CD14-positive monocyte (primary cell): ENCODE measurements at regions of chr6 and their contacts with region 1.

Region 1: DNA sequence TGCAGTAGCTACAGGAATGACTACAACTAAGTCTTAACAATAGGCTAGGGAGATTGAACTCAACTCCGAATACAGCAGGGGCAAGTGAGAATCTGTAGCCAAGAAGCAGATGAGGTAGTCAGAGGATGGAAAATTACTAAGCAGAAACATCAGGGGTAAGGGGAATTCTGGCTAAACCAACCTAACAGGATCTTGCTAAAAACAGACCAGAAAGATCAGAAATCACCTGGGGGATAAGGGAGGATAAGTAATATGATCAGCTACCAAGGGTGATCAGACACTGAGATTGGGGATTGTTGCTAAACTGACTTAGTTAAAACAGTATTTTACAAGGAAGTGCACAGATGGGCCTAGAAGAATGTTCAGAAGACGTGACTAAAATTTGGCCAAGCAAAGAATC is 217.5 kb downstream of the TENT5A start:
- DNase-seq: no peak
- H3K4me3 ChIP-seq: no peak overlapping the region
- H3K4me3 Mint-ChIP-seq: no peak overlapping the region
- H3K27ac ChIP-seq: no peak overlapping the region
- H3K27ac Mint-ChIP-seq: no peak overlapping the region
- H3K4me1 ChIP-seq: no peaks in the 10 kb centered on the region
- H3K4me1 Mint-ChIP-seq: no peaks in the 10 kb centered on the region
- H3K27me3 ChIP-seq: no peaks in the 10 kb centered on the region
- H3K27me3 Mint-ChIP-seq: peaks cover 0 to 2% (median 0%) of the 10 kb centered on the region in 3 donors
- CTCF ChIP-seq: no peak

Region 2: GRCh38 chr6:81487489-81487888 is 47.5 kb before region 1 on chr6:
- intact Hi-C with region 1: no loop called
- DNase-seq: no peak
- H3K4me3 ChIP-seq: no peak overlapping the region
- H3K4me3 Mint-ChIP-seq: no peak overlapping the region
- H3K27ac ChIP-seq: no peak overlapping the region
- H3K27ac Mint-ChIP-seq: no peak overlapping the region
- H3K4me1 ChIP-seq: no peaks in the 10 kb centered on the region
- H3K4me1 Mint-ChIP-seq: no peaks in the 10 kb centered on the region
- H3K27me3 ChIP-seq: no peaks in the 10 kb centered on the region
- H3K27me3 Mint-ChIP-seq: peaks cover 0 to 3% (median 2%) of the 10 kb centered on the region in 3 donors
- CTCF ChIP-seq: no peak

Region 3: DNA sequence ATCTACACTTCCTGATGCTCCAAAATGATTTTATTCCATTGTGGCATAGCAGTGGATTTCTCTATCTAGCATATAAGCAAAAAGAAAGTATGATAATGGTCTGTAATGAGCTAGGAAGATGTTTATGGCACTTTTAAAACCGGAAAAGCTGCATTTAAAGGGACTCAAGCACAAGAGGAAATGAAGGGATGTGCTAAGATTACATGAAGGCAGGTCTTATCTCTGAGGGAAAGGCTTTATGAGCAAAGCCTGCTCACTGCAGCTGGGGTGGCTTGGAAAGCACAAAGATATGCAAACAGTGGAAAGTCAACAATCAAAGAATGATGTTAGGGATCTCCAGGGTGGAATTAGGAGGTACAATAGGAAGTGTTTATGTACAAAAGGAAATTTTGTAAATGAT is 79.3 kb after region 1 on chr6:
- intact Hi-C with region 1: no loop called
- DNase-seq: no peak
- H3K4me3 ChIP-seq: no peak overlapping the region
- H3K4me3 Mint-ChIP-seq: no peak overlapping the region
- H3K27ac ChIP-seq: no peak overlapping the region
- H3K27ac Mint-ChIP-seq: no peak overlapping the region
- H3K4me1 ChIP-seq: peaks cover 0 to 5% of the 10 kb centered on the region in 2 donors
- H3K4me1 Mint-ChIP-seq: peaks cover 6% of the 10 kb centered on the region
- H3K27me3 ChIP-seq: no peaks in the 10 kb centered on the region
- H3K27me3 Mint-ChIP-seq: peaks cover 0 to 1% (median 0%) of the 10 kb centered on the region in 3 donors
- CTCF ChIP-seq: no peak

Region 4: DNA sequence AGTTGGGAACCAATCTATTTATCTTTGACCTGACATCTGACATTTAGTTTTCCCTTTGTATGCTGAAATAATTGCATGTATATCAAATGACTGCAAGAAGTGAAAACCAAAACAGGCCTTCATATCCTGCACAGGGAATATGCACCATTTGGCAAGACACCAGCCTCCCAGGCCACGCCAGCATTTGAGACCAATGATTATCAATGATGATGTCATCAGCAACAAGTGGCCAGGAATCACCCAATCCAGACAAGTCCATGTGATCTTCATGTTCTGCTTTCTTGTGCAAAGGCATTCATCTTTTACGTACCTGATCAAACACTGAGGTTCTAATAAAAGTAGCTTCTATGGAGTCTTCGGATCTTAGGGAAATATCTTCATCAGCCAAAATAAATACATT is 324.9 kb after region 1 on chr6:
- intact Hi-C with region 1: loop called in 1 of 2 experiments (anchors 5 kb)
- DNase-seq: no peak
- H3K4me3 ChIP-seq: no peak overlapping the region
- H3K4me3 Mint-ChIP-seq: no peak overlapping the region
- H3K27ac ChIP-seq: no peak overlapping the region
- H3K27ac Mint-ChIP-seq: peak overlapping the region in 1 of 7 donors; percentile 22
- H3K4me1 ChIP-seq: no peaks in the 10 kb centered on the region
- H3K4me1 Mint-ChIP-seq: peaks cover 8% of the 10 kb centered on the region
- H3K27me3 ChIP-seq: no peaks in the 10 kb centered on the region
- H3K27me3 Mint-ChIP-seq: peaks cover 0 to 2% (median 0%) of the 10 kb centered on the region in 3 donors
- CTCF ChIP-seq: no peak